Left cardiac atrium (tissue), 4 donors: ENCODE measurements at regions of chr6 and their contacts with region 1.

Region 1: DNA sequence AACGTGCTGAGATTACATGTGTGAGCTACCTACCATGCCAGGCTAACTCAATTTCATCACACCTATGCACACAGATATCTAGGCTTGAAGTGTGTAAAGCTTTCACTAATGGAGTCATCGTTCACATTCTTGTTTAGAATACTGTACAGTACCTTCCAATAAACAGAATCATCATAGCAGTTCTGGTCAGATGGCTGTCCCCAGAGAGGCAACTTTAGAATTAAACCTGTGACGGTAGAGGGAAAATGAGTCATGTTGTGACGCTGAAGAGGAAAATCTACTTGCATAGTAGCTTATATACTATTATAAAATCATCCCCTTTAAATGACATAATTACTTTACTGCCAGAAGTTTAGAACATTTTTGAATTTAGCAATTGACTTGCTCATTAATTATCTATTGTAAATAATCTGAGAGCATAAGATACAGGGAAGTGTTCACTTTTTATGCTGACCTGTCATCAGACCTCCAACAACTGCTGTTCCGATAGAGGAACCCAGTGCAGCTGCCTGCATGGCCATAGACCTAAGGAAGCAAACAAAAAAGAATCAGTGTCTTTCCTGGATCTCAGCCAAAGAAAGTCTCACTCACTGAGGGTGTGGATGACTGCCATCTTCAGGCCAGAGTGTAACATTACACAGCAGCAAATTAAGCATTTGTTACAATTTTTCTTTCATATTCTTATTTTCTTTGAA is 29.8 kb downstream of the RHAG start:
- DNase-seq: no peak
- ATAC-seq: peak; percentile 44 to 55

Region 2: DNA sequence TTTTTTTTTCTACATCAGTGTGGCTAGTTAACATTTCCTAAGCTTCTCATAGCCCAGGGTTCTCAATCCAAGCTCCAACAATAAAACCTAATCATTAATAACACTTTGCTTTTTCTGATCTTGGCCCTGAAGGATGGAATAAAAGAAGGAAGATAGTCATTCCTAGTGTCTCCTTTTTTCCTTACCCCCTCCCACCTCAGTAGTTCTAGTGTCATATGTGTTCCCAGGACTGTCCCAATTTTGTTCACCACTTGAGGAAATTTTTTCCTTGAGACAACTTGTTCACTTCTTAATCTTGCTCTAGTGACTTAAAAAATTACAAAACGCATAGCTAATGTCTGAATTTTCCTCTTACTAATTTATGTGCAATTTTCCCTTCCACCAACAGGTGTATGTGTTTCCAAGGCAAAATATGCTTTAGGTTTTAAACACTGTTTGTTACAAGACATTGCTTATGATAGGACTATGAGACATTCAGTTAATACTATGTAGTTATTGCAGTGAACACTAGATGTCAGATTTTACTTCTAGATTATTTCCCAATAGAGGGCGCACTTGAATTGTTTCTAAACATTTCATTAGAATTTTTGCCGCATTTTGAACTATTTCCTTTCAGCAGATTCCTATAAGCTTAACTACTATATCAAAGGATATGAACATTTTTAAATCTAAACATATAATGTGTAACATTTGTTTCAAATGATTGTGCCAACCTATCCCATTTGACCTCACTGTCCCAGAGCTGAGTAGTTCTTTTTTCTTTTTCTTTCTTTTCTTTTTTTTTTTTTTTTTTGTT is 74.9 kb before region 1 on chr6:
- intact Hi-C with region 1: loop called in 1 of 2 experiments (anchors 5 kb)
- DNase-seq: no peak
- ATAC-seq: peak in 1 of 2 donors; percentile 72

Region 3: GRCh38 chr6:49668082-49668512 is 61.3 kb after region 1 on chr6:
- intact Hi-C with region 1: no loop called
- DNase-seq: no peak
- ATAC-seq: no peak